H1 (cell line): ENCODE measurements at regions of chr6 and their contacts with region 1.

Region 1: DNA sequence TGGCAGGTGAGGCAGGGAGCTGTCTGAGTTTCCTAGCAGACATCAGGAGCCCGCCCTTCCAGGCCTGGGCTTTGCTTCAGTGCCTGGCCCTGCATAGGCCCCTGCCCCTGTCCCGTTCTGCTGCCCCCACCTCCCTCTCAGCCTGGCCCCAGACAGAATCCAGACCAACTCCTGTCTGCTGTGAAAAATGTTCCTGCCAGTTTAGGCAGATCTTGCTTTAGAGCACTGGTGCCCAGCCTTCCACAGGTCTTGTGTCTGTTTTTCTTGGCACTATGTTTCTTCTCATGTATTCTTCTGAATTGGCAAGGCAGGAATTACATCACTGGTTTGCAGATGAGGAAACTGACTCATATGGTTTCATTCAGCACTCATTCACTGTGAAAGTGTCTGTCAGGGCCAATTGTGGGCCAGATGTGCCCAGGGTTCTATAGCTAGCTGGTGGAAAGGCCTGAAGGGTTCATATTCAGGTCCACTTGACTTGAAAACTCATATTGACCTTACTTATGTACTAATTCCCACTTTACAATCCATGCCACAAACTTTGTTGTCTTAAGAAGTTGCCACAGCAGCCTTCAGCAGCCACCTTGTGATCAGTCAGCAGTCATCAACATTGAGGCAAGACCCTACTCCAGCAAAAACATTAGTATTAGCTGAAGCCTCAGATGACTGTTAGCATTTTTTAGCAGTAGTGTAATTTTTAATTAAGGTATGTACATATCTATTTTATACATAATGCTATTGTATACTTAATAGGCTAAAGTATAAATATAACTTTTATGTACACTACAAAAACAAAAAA is 40.5 kb downstream of the HLA-F start:
- DNase-seq: no peak
- H3K4me3 ChIP-seq: no peak overlapping the region
- H3K27ac ChIP-seq: no peak overlapping the region
- H3K4me1 ChIP-seq: peaks cover 5 to 17% (median 11%) of the 10 kb centered on the region in 4 experiments; a peak in 6 of 7 replicates
- H3K27me3 ChIP-seq: no peaks in the 10 kb centered on the region
- CTCF ChIP-seq: no peak
- EP300 ChIP-seq: no peak
- POLR2A ChIP-seq: no peak
- RAD21 ChIP-seq: no peak

Region 2: GRCh38 chr6:29447670-29448069 is 316.0 kb before region 1 on chr6:
- CTCF ChIA-PET with region 1: no interaction called
- POLR2A ChIA-PET with region 1: no interaction called
- DNase-seq: peak in 1 of 2 experiments; percentile 29
- H3K4me3 ChIP-seq: no peak overlapping the region; a peak in 1 of 8 replicates
- H3K27ac ChIP-seq: no peak overlapping the region
- H3K4me1 ChIP-seq: peaks cover 0 to 3% (median 2%) of the 10 kb centered on the region in 4 experiments; a peak in 5 of 7 replicates
- H3K27me3 ChIP-seq: no peaks in the 10 kb centered on the region
- CTCF ChIP-seq: no peak
- EP300 ChIP-seq: no peak
- POLR2A ChIP-seq: no peak
- RAD21 ChIP-seq: no peak

Region 3: GRCh38 chr6:29752451-29753308 is 11.0 kb before region 1 on chr6:
- CTCF ChIA-PET with region 1: interaction called, 19 read pairs
- POLR2A ChIA-PET with region 1: interaction called, 15 read pairs
- DNase-seq: peak; percentile 82 to 91
- H3K4me3 ChIP-seq: peak overlapping the region; percentile 37 to 78 (median 69)
- H3K27ac ChIP-seq: no peak overlapping the region
- H3K4me1 ChIP-seq: peaks cover 6 to 19% (median 10%) of the 10 kb centered on the region in 4 experiments; a peak in 6 of 7 replicates
- H3K27me3 ChIP-seq: peaks cover 8 to 48% (median 38%) of the 10 kb centered on the region in 4 experiments
- CTCF ChIP-seq: peak; percentile 97 to 100 (median 99)
- EP300 ChIP-seq: peak in 1 of 2 experiments; percentile 60; a peak in 1 of 3 replicates
- POLR2A ChIP-seq: peak in 1 of 2 experiments; percentile 80; a peak in 2 of 3 replicates
- RAD21 ChIP-seq: peak; percentile 71 to 82